Mammary epithelial cell (primary cell): ENCODE measurements at regions of chr15 and their contacts with region 1.

Region 1: GRCh38 chr15:92797168-92797951 is 102.8 kb upstream of the CHD2 start:
- DNase-seq: peak; percentile 66
- H3K4me3 ChIP-seq: no peak overlapping the region
- H3K27ac ChIP-seq: peak overlapping the region; percentile 35
- H3K4me1 ChIP-seq: peaks cover 17% of the 10 kb centered on the region
- H3K27me3 ChIP-seq: no peaks in the 10 kb centered on the region
- CTCF ChIP-seq: peak; percentile 58 to 65

Region 2: GRCh38 chr15:92917606-92918407 is 120.4 kb after region 1 on chr15:
- CTCF ChIA-PET with region 1: interaction called, 9 read pairs
- dilution Hi-C with region 1: no loop called
- in situ Hi-C with region 1: loop called in 1 of 2 experiments (anchors 10 kb)
- intact Hi-C with region 1: loop called (anchors 1 kb)
- DNase-seq: peak; percentile 86
- H3K4me3 ChIP-seq: peak overlapping the region in 1 of 3 experiments; percentile 8
- H3K27ac ChIP-seq: peak overlapping the region; percentile 83
- H3K4me1 ChIP-seq: peaks cover 61% of the 10 kb centered on the region
- H3K27me3 ChIP-seq: no peaks in the 10 kb centered on the region
- CTCF ChIP-seq: peak; percentile 75 to 87

Region 3: GRCh38 chr15:93997084-93997918 is 1199.9 kb after region 1 on chr15:
- CTCF ChIA-PET with region 1: no interaction called
- dilution Hi-C with region 1: no loop called
- in situ Hi-C with region 1: no loop called
- intact Hi-C with region 1: loop called (anchors 10 kb)
- DNase-seq: peak; percentile 11
- H3K4me3 ChIP-seq: no peak overlapping the region
- H3K27ac ChIP-seq: no peak overlapping the region
- H3K4me1 ChIP-seq: no peaks in the 10 kb centered on the region
- H3K27me3 ChIP-seq: peaks cover 2% of the 10 kb centered on the region
- CTCF ChIP-seq: peak; percentile 74 to 85